Activated T-helper 1 cell treated with anti-CD3 and anti-CD28 coated beads, Interleukin-12 subunit alpha, Interleukin-12 subunit beta, Interleukin-2, Interleukin-4 antibody, amounts not matched to agents 30 ng/mL and 10 ng/mL and 1 ng/mL, durations not matched to agents 14 hours and 24 hours and 36 hours (primary cell): ENCODE measurements at regions of chr5 and their contacts with region 1.

Region 1: GRCh38 chr5:50962934-50963872 is 296.8 kb downstream of the PARP8 start:
- DNase-seq: peak; percentile 51
- H3K4me3 Mint-ChIP-seq: peak overlapping the region; percentile 82
- H3K27ac Mint-ChIP-seq: peak overlapping the region; percentile 63
- H3K4me1 Mint-ChIP-seq: peaks cover 39% of the 10 kb centered on the region
- H3K27me3 Mint-ChIP-seq: peaks cover 64% of the 10 kb centered on the region

Region 2: DNA sequence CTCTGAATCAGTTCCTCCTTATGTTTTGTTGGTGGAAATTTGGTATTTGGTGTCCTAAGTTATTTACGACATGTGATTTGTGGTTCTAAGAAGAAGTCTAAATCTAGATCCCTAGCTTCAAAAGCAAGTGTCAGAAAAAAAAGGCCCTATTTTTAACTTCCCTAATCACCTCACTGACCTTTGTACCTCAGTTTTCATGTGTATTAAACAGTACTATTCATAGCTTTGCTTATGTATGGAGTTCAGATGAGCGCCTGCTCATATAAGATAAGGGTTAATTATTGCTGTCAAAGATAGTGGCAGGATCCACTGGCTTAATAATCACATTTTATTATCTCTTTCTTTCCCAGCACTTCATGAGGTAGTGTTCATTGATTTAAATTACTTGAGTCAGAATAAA is 21.4 kb after region 1 on chr5:
- intact Hi-C with region 1: no loop called
- DNase-seq: no peak
- H3K4me3 Mint-ChIP-seq: no peak overlapping the region
- H3K27ac Mint-ChIP-seq: no peak overlapping the region
- H3K4me1 Mint-ChIP-seq: no peaks in the 10 kb centered on the region
- H3K27me3 Mint-ChIP-seq: peaks cover 1% of the 10 kb centered on the region

Region 3: GRCh38 chr5:51148437-51148836 is 185.2 kb after region 1 on chr5:
- intact Hi-C with region 1: no loop called
- DNase-seq: no peak
- H3K4me3 Mint-ChIP-seq: no peak overlapping the region
- H3K27ac Mint-ChIP-seq: no peak overlapping the region
- H3K4me1 Mint-ChIP-seq: no peaks in the 10 kb centered on the region
- H3K27me3 Mint-ChIP-seq: no peaks in the 10 kb centered on the region

Region 4: GRCh38 chr5:51382763-51383490 is 419.7 kb after region 1 on chr5 and contains the start of gene ISL1:
- intact Hi-C with region 1: loop called (anchors 2 kb)
- DNase-seq: no peak
- H3K4me3 Mint-ChIP-seq: no peak within 1 kb of the TSS
- H3K27ac Mint-ChIP-seq: peak within 1 kb of the TSS; percentile 31
- H3K4me1 Mint-ChIP-seq: peaks cover 12% of the 10 kb centered on the region
- H3K27me3 Mint-ChIP-seq: peaks cover 90% of the 10 kb centered on the region
- total RNA-seq, gene ISL1: not detected in 2 replicates

Region 5: DNA sequence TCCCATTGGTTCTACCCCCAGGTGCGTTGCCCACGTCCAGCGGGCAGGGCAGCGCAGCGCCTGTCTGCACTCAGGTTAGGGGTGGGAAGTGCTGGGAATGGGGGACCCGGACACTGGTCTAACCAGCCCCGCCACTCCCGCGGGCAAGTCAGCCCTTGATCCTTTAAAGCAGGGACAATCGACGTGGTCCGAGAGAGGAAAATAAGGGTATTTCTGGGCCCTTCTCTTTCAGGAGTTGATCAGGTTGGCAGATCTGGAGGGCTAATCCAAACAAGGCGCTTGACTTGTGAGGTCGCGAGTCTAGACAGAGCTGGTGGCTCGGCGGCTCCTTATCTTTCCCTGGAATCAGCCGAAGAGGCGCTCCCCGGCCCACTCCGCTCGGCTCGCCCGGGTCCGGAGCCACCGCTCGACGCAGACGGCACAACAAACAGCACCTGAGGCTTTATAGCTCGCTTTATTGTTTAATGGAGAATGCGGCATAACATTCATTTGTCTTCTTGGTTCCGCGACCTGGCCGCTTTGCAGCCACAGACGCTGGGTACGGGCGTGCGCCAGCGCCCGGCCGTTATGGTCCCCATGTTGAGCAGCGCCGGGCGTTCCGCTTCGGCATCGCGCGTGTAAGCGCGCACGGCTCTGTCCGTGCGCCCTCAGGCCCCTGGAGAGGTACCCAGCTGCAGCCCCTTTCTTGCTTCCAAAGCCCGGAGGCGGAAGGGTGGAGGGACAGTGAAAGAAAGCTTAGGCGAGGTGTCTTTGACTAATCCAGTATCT is 435.9 kb after region 1 on chr5:
- intact Hi-C with region 1: loop called (anchors 5 kb)
- DNase-seq: no peak
- H3K4me3 Mint-ChIP-seq: no peak overlapping the region
- H3K27ac Mint-ChIP-seq: no peak overlapping the region
- H3K4me1 Mint-ChIP-seq: no peaks in the 10 kb centered on the region
- H3K27me3 Mint-ChIP-seq: peaks cover 37% of the 10 kb centered on the region

Region 6: DNA sequence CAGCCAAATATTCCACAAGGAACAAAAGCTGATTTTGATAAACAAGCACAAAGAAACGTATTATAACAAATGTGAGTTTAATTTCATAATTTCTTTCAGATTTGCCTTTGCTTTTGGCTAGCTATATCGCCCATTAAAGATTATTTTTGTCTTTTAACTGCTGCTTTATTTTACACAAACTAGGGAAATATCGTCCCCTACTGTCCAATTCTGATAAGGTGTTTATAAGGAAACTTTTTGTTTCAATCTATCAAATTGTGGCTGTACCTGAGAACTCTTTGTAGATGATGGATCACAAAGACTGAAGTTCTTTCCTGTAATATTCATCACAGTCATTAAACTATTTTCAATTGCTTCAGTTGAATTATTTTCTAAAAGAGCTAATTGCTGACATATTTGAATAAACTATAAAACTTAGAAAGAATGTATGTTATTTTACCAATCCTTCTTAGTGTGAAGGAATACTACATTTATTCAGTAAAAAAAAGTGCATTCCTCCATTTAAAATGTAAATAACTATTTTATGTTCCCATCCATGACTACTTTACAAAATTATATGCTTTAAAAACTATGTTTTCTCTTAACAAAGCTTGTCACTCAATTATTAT is 1393.2 kb after region 1 on chr5:
- intact Hi-C with region 1: loop called (anchors 2 kb)
- DNase-seq: no peak
- H3K4me3 Mint-ChIP-seq: no peak overlapping the region
- H3K27ac Mint-ChIP-seq: no peak overlapping the region
- H3K4me1 Mint-ChIP-seq: no peaks in the 10 kb centered on the region
- H3K27me3 Mint-ChIP-seq: peaks cover 6% of the 10 kb centered on the region

Region 7: DNA sequence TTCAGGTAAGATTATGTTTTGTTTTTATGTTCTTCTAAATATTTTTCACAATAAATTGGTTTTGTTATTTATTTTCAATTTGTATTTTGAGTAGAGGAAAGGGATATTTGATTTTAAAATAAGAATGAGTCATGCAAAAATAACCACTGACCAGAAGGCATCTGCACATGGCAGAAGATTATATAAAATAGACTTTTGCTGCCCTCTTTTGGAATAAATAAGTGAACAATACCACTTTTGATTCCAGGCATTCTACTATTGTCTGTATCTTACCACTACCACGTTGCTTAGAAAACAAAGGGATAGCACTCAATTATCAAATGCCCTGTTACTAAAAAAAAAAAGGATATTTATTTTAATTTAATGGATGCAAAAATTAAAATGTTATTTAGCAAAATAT is 1597.2 kb after region 1 on chr5:
- intact Hi-C with region 1: loop called (anchors 5 kb)
- DNase-seq: no peak
- H3K4me3 Mint-ChIP-seq: no peak overlapping the region
- H3K27ac Mint-ChIP-seq: no peak overlapping the region
- H3K4me1 Mint-ChIP-seq: no peaks in the 10 kb centered on the region
- H3K27me3 Mint-ChIP-seq: peaks cover 8% of the 10 kb centered on the region

Region 8: DNA sequence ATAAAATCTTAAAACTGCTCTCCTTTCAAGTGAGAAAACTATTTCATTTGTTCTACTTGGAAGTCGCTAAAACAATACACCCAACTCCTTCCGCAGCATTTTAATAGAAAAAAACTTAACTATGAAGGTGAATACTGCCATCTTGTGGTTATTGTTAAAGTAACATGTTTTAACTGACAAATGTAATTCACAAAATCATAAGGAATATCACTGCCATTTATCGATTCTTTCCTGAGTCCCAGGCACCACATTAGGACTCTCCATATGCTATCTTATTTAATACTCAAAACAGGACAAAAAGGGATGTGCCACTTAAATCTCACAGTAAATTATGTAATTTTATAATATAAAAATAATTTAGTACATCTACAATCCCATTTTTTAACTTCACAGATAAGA is 1694.0 kb after region 1 on chr5:
- intact Hi-C with region 1: loop called (anchors 1 kb)
- DNase-seq: no peak
- H3K4me3 Mint-ChIP-seq: no peak overlapping the region
- H3K27ac Mint-ChIP-seq: no peak overlapping the region
- H3K4me1 Mint-ChIP-seq: peaks cover 5% of the 10 kb centered on the region
- H3K27me3 Mint-ChIP-seq: peaks cover 35% of the 10 kb centered on the region